ENCODE measurements at regions of chr22 and their contacts with region 1.

Region 1: DNA sequence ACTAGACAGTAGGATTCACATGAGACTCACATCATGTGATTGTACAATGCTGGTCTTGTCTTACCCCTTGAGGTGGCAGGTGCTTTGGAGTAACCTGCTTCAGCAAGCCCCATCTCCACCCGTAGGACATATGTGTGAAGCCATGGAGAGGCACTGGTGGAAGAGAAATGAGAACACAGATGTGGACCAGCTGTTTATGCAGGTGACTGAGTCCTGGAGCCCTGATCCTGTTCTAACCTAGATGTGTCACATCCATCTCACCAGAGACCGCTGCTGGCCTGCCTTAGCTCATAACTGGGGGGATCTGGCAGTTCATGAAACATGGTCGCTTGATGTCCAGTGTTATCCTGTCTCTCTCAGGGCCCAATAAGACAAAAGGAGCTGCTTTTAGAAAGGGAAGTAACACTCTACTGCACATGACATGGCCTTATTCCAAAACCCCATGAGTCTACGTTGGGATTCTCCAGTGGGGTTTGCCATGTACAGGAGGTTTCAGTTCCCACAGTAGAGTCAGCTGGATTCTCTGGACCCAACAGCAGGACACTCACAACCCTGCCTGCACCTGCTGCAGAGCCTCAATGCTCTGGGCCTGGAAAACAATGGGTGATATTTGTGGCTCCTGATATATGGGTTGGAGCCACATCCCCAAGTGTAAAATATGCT is 62.0 kb downstream of the GGTLC2 start:
- DNase-seq: no peak
- H3K4me3 ChIP-seq: no peak overlapping the region
- H3K27ac ChIP-seq: no peak overlapping the region
- H3K27me3 ChIP-seq: peaks cover 0 to 7% (median 0%) of the 10 kb centered on the region in 45 donors
- CTCF ChIP-seq: no peak

Region 2: DNA sequence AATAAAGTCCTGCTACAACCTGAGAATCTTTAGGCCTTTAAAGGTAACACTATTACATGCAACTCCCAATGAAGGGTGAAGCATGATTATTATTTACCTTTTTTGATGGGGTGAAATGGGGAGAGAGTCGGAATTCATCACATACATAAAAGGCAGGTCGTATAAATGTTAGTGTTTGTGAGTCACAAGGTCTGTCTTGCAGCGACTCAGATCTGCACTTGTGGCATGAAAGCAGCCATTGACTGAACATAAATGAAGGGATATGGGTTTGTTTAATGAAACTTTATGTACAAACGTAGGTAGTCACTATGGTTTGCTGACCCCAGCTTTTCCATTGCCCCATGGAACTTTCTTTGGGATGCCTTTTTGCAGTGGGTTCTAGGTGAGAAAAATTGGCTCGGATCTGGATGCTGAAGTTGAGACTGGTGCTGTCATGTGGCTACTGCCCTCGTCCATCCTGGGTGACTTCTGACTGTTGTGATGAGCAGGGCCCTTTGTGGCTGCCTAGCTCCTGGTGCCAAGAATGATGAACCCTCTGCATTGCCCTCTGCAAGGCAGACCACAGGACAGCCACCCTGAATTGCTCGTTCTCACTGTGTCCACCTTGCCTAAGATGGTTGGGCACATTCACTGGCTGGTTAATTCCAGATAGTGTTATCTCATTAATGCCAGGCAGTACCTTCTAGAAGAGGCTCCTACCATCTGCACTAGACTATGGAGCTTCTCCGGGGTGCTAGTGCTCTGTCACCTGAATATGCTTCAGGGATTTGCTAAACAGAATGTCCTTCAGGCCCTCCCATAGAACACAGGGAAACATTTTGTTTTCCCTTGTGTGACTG is 50.7 kb before region 1 on chr22:
- intact Hi-C with region 1: no loop called
- DNase-seq: no peak
- H3K4me3 ChIP-seq: no peak overlapping the region
- H3K27ac ChIP-seq: no peak overlapping the region
- H3K27me3 ChIP-seq: peaks cover 0 to 7% (median 0%) of the 10 kb centered on the region in 45 donors
- CTCF ChIP-seq: no peak

Region 3: GRCh38 chr22:22666307-22667091 is 39.9 kb before region 1 on chr22:
- intact Hi-C with region 1: no loop called
- DNase-seq: peak in 1 of 10 donors; percentile 7
- H3K4me3 ChIP-seq: no peak overlapping the region
- H3K27ac ChIP-seq: no peak overlapping the region
- H3K27me3 ChIP-seq: peaks cover 0 to 9% (median 0%) of the 10 kb centered on the region in 45 donors
- CTCF ChIP-seq: peak in 32 of 56 donors; percentile 8 to 49 (median 24)

Region 4: GRCh38 chr22:22764085-22764484 is 57.7 kb after region 1 on chr22:
- intact Hi-C with region 1: loop called in 1 of 2 experiments (anchors 2 kb)
- DNase-seq: no peak
- H3K4me3 ChIP-seq: no peak overlapping the region
- H3K27ac ChIP-seq: no peak overlapping the region
- H3K27me3 ChIP-seq: peaks cover 0 to 18% (median 0%) of the 10 kb centered on the region in 45 donors
- CTCF ChIP-seq: no peak

Measured in dorsolateral prefrontal cortex (tissue), 120 donors.